Sigmoid colon (tissue), 7 donors: ENCODE measurements at regions of chr9 and their contacts with region 1.

Region 1: GRCh38 chr9:125241000-125241862 is at the start of gene HSPA5:
- DNase-seq: peak; percentile 100
- H3K4me3 ChIP-seq: peak within 1 kb of the TSS; percentile 90 to 97 (median 96)
- H3K27ac ChIP-seq: peak within 1 kb of the TSS; percentile 94 to 100 (median 98)
- H3K4me1 ChIP-seq: peaks cover 0 to 49% (median 46%) of the 10 kb centered on the region in 4 donors
- H3K27me3 ChIP-seq: no peaks in the 10 kb centered on the region
- CTCF ChIP-seq: peak in 1 of 4 experiments; percentile 18
- EP300 ChIP-seq: no peak
- POLR2A ChIP-seq: peak; percentile 93 to 95
- total RNA-seq, gene HSPA5: 46.5 to 65.4 (median 58.7) TPM

Region 2: GRCh38 chr9:125043631-125044030 is 197.6 kb before region 1 on chr9:
- intact Hi-C with region 1: no loop called
- DNase-seq: no peak
- H3K4me3 ChIP-seq: no peak overlapping the region
- H3K27ac ChIP-seq: no peak overlapping the region
- H3K4me1 ChIP-seq: no peaks in the 10 kb centered on the region
- H3K27me3 ChIP-seq: no peaks in the 10 kb centered on the region
- CTCF ChIP-seq: no peak
- EP300 ChIP-seq: no peak
- POLR2A ChIP-seq: no peak

Region 3: GRCh38 chr9:125200210-125201047 is 40.8 kb before region 1 on chr9 and contains the start of gene RABEPK:
- intact Hi-C with region 1: loop called (anchors 5 kb)
- DNase-seq: peak; percentile 98
- H3K4me3 ChIP-seq: peak within 1 kb of the TSS; percentile 38 to 84 (median 76)
- H3K27ac ChIP-seq: peak within 1 kb of the TSS; percentile 93 to 96 (median 95)
- H3K4me1 ChIP-seq: peaks cover 0 to 23% (median 16%) of the 10 kb centered on the region in 4 donors
- H3K27me3 ChIP-seq: no peaks in the 10 kb centered on the region
- CTCF ChIP-seq: no peak
- EP300 ChIP-seq: peak in 1 of 4 donors; percentile 36
- POLR2A ChIP-seq: peak; percentile 83 to 85
- total RNA-seq, gene RABEPK: 9.4 to 18.6 (median 14.9) TPM

Region 4: DNA sequence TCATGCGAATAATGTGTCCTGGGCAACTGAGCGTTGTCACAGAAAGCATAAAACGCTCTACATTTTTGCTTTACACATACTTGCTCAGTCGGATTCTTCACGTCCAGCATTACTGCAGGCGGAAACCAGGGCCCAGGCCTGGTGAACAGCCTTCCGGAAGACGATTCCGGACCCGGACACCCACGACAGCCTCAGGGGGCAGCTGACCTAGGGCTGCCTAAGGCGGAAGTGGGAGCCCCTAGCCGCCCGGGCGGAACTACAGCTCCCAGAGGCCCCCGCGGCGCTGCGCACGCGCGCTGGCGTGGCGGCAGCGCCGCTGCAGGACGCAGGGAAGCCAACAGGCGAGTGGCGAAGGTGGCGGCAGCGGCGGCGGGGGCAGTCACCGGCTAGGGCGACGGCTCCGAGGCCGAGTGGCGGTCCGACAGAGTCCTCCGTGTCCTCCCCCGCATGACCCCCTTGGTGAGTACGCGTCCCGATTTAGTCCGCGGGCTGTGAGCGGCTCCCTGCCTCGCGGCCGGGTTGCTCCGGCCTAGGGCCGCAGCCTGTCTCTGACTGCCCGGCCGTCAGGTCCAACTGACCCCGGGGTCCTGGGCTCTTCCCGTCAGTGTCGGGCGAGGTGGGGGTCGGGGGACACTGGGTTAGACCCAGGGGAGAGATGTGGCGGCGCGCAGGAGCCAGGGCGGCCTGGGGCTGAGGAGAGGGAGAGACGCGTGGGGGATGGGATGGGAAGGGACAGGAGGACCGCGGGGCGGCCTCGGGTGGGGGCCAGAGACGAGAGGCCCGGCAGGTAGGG is 20.5 kb after region 1 on chr9 and contains the start of gene GAPVD1:
- intact Hi-C with region 1: loop called (anchors 1 kb)
- DNase-seq: peak; percentile 93
- H3K4me3 ChIP-seq: peak within 1 kb of the TSS; percentile 84 to 99 (median 92)
- H3K27ac ChIP-seq: peak within 1 kb of the TSS; percentile 81 to 89 (median 86)
- H3K4me1 ChIP-seq: peaks cover 0 to 32% (median 17%) of the 10 kb centered on the region in 4 donors
- H3K27me3 ChIP-seq: no peaks in the 10 kb centered on the region
- CTCF ChIP-seq: peak in 2 of 4 experiments; percentile 33 to 50
- EP300 ChIP-seq: no peak
- POLR2A ChIP-seq: peak in 1 of 2 donors; percentile 34
- total RNA-seq, gene GAPVD1: 44.9 to 182 (median 54.3) TPM